ENCODE measurements at regions of chr2 and their contacts with region 1.

Region 1: GRCh38 chr2:217785544-217786045 is 217.2 kb downstream of the TNS1 start:
- DNase-seq: peak; percentile 79 to 82
- H3K4me3 ChIP-seq: no peak overlapping the region
- H3K27ac ChIP-seq: no peak overlapping the region
- H3K4me1 ChIP-seq: peaks cover 0 to 11% of the 10 kb centered on the region in 2 donors
- H3K27me3 ChIP-seq: no peaks in the 10 kb centered on the region
- CTCF ChIP-seq: peak; percentile 90 to 98 (median 96)
- POLR2A ChIP-seq: no peak

Region 2: DNA sequence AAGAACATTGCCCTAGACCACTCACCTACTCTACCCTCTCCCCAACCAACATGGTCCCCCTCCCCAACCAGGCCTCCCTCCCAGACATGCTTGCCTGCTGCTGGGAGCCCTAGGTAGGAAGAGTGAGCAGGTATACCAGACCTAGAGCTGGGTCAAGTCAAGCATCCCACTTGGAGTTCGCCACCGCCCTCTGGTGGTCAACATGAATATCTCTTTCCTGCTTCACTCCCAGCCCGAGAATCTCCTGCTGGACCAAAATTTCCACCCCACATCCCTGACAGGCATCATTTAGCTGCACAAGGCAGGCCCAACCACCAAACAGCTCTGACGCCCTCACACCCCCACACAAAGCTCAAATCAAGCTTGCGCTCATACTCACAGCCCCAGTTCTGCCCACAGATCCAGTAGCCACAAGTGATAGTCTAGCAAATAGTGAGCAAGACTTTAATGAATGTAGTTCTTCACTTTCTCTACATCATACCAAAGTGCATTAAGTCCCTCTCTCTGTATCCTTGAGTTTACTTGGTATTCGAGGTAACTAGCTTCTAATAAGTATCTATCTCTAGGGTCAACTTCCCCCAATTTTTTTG is 101.2 kb after region 1 on chr2:
- intact Hi-C with region 1: loop called (anchors 5 kb)
- DNase-seq: peak; percentile 82 to 89
- H3K4me3 ChIP-seq: no peak overlapping the region
- H3K27ac ChIP-seq: peak overlapping the region in 2 of 3 donors; percentile 18 to 61
- H3K4me1 ChIP-seq: peaks cover 17 to 36% of the 10 kb centered on the region in 2 donors
- H3K27me3 ChIP-seq: no peaks in the 10 kb centered on the region
- CTCF ChIP-seq: peak; percentile 58 to 84 (median 72)
- POLR2A ChIP-seq: no peak

Region 3: GRCh38 chr2:217988014-217988839 is 202.6 kb after region 1 on chr2:
- intact Hi-C with region 1: loop called (anchors 2 kb)
- DNase-seq: peak; percentile 97
- H3K4me3 ChIP-seq: no peak overlapping the region
- H3K27ac ChIP-seq: peak overlapping the region; percentile 86 to 94 (median 86)
- H3K4me1 ChIP-seq: peaks cover 19 to 39% of the 10 kb centered on the region in 2 donors
- H3K27me3 ChIP-seq: no peaks in the 10 kb centered on the region
- CTCF ChIP-seq: peak; percentile 86 to 98 (median 93)
- POLR2A ChIP-seq: peak in 1 of 2 donors; percentile 41

Region 4: DNA sequence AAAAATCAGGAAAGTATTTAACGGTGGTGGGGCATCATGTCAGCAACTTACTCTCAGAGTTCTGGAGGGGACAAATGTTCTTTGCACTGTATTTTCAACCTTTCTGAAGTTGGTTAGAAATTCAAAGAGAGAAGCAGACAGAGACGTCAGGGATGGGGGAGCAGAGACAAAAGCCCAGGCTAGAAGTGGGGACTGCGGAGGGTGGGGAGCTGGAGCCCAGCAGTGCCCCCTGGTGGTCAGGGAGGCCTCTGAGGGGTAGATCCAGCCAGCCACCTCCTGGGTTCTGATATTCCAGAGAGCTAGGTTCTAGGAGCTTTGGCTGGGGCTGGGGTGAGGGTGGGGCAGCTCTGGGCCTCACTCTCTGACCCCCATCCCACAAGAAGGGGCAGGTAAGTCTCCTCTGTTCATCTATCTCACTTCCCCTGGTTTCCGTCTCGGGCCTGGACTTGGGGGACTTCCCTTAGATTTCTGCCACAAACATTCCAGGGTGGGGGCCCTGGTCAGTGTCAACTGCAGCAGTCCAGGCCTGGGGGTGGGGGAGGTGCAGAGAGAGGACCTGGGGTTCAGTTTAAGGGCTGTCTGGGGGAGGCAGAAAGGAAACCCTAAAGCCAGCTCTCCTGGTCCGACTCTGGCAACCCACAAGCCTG is 208.3 kb after region 1 on chr2:
- intact Hi-C with region 1: loop called (anchors 2 kb)
- DNase-seq: peak; percentile 68 to 71
- H3K4me3 ChIP-seq: no peak overlapping the region
- H3K27ac ChIP-seq: peak overlapping the region in 2 of 3 donors; percentile 12 to 67
- H3K4me1 ChIP-seq: peaks cover 3 to 49% of the 10 kb centered on the region in 2 donors
- H3K27me3 ChIP-seq: no peaks in the 10 kb centered on the region
- CTCF ChIP-seq: peak; percentile 61 to 82 (median 68)
- POLR2A ChIP-seq: no peak

Region 5: GRCh38 chr2:218033590-218034496 is 248.2 kb after region 1 on chr2:
- intact Hi-C with region 1: loop called (anchors 2 kb)
- DNase-seq: no peak
- H3K4me3 ChIP-seq: no peak overlapping the region
- H3K27ac ChIP-seq: no peak overlapping the region
- H3K4me1 ChIP-seq: peaks cover 14 to 26% of the 10 kb centered on the region in 2 donors
- H3K27me3 ChIP-seq: no peaks in the 10 kb centered on the region
- CTCF ChIP-seq: no peak
- POLR2A ChIP-seq: no peak

Region 6: GRCh38 chr2:218063486-218063885 is 277.9 kb after region 1 on chr2:
- intact Hi-C with region 1: loop called (anchors 10 kb)
- DNase-seq: no peak
- H3K4me3 ChIP-seq: no peak overlapping the region
- H3K27ac ChIP-seq: no peak overlapping the region
- H3K4me1 ChIP-seq: no peaks in the 10 kb centered on the region
- H3K27me3 ChIP-seq: no peaks in the 10 kb centered on the region
- CTCF ChIP-seq: no peak
- POLR2A ChIP-seq: no peak